ENCODE measurements at regions of chr3 and their contacts with region 1.

Region 1: GRCh38 chr3:178743297-178743696 is 207.1 kb downstream of the KCNMB2 start:
- DNase-seq: no peak
- H3K4me3 ChIP-seq: no peak overlapping the region
- H3K27ac ChIP-seq: no peak overlapping the region
- H3K4me1 ChIP-seq: peaks cover 0 to 7% (median 2%) of the 10 kb centered on the region in 4 donors
- H3K27me3 ChIP-seq: no peaks in the 10 kb centered on the region
- CTCF ChIP-seq: no peak
- EP300 ChIP-seq: no peak
- POLR2A ChIP-seq: no peak

Region 2: DNA sequence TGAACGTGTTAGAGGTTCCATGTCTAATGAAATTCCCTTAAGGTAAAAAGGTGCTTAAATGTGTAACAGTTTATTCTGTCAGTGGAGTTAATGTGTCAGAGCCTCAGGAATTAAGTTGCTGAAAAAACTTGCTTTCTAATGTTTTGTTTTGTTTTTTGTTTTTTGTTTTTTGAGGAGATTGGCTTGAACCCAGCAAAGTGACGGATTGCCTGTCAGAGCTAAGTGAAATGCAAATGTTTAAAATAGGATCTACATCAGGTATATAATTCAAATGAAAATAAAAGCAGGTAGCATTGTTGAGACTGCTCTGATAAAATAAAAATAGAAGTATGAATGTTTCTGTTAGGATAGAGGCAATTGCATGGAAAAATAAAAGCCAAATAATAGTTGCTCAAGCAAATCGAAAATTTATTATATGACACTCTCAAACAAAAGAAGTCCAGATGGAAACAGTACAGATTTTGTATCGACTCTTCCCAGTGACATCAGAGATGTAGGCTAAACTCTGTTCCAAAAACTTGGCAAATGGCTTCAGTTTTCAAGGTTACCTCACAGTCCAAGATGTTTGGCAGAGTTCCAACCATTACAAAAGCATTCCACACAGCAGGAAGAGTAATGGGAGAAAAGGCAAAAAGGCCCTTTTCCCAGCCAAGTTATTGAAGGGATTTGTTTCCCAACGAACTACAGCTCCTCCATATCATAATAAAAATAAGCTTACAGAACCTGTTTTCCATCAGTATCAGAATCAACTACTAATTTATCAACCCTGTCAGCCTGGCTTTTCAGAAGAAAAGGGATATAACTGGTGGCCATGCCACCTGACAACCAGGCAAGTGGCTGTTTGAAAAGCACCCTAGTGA is 1837.0 kb before region 1 on chr3:
- in situ Hi-C with region 1: no loop called
- intact Hi-C with region 1: loop called (anchors 10 kb)
- DNase-seq: no peak
- H3K4me3 ChIP-seq: no peak overlapping the region
- H3K27ac ChIP-seq: no peak overlapping the region
- H3K4me1 ChIP-seq: no peaks in the 10 kb centered on the region
- H3K27me3 ChIP-seq: no peaks in the 10 kb centered on the region
- CTCF ChIP-seq: no peak
- EP300 ChIP-seq: no peak
- POLR2A ChIP-seq: no peak

Region 3: GRCh38 chr3:179544981-179545645 is 801.8 kb after region 1 on chr3:
- in situ Hi-C with region 1: no loop called
- intact Hi-C with region 1: no loop called
- DNase-seq: no peak
- H3K4me3 ChIP-seq: no peak overlapping the region
- H3K27ac ChIP-seq: no peak overlapping the region
- H3K4me1 ChIP-seq: no peaks in the 10 kb centered on the region
- H3K27me3 ChIP-seq: no peaks in the 10 kb centered on the region
- CTCF ChIP-seq: no peak
- EP300 ChIP-seq: no peak
- POLR2A ChIP-seq: no peak

Measured in transverse colon (tissue), 4 donors.